Activated T-helper 2 cell treated with anti-CD3 and anti-CD28 coated beads, Interferon-gamma antibody, Interleukin-2, Interleukin-4, amounts not matched to agents 10 μg/mL and 5 μg/mL and 100 μg/mL, durations not matched to agents 14 hours and 24 hours and 36 hours (primary cell): ENCODE measurements at regions of chr16 and their contacts with region 1.

Region 1: GRCh38 chr16:53781023-53781605 is 77.2 kb downstream of the FTO start:
- DNase-seq: no peak
- H3K4me3 Mint-ChIP-seq: no peak overlapping the region
- H3K27ac Mint-ChIP-seq: no peak overlapping the region
- H3K4me1 Mint-ChIP-seq: peaks cover 20% of the 10 kb centered on the region
- H3K27me3 Mint-ChIP-seq: no peaks in the 10 kb centered on the region

Region 2: GRCh38 chr16:53805113-53805512 is 24.0 kb after region 1 on chr16:
- intact Hi-C with region 1: no loop called
- DNase-seq: no peak
- H3K4me3 Mint-ChIP-seq: no peak overlapping the region
- H3K27ac Mint-ChIP-seq: no peak overlapping the region
- H3K4me1 Mint-ChIP-seq: peaks cover 27% of the 10 kb centered on the region
- H3K27me3 Mint-ChIP-seq: no peaks in the 10 kb centered on the region

Region 3: GRCh38 chr16:53864819-53865493 is 83.8 kb after region 1 on chr16:
- intact Hi-C with region 1: loop called (anchors 5 kb)
- DNase-seq: no peak
- H3K4me3 Mint-ChIP-seq: no peak overlapping the region
- H3K27ac Mint-ChIP-seq: peak overlapping the region; percentile 80
- H3K4me1 Mint-ChIP-seq: peaks cover 34% of the 10 kb centered on the region
- H3K27me3 Mint-ChIP-seq: no peaks in the 10 kb centered on the region